Activated CD4-positive, alpha-beta T cell treated with anti-CD3 and anti-CD28 coated beads for 36 hours (primary cell): ENCODE measurements at regions of chr9 and their contacts with region 1.

Region 1: DNA sequence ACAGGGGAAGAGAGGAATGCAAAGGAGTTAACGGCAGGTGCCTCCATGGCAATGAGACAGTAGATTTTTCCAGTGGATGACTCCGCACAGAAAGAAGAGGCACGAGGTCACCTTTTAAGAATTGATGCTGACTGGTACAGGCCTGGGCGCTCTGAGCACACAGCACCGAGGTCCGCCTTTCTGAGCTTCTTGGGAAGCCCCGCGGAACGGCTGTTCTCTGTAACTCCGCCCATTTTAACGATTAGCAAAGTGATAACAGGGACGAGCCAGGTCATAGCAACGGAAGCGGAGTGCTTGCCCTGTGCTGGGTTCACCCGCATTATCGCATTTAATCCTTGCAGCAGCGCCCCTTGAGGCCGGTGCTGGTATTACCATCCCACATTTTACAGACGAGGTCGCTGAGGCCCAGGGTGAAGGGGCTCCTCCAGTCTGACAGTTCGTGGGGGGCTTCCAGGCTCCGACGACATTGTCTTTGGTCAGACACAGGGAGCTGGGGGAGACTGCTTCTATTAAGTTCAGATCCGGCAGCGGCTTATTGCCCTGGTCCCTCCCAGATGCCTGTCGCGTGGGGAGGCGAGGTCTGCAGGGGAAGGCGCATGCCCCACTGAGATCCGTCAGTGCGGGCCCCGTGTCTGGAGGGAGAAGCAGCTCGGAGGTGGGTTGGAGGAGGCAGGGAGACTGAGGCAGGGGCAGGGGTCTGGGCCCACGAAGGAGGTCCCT is 22.4 kb upstream of the HMCN2 start:
- DNase-seq: peak; percentile 88
- ATAC-seq: peak; percentile 45
- H3K4me3 Mint-ChIP-seq: peak overlapping the region; percentile 8
- H3K27ac Mint-ChIP-seq: peak overlapping the region; percentile 26
- H3K4me1 Mint-ChIP-seq: peaks cover 32% of the 10 kb centered on the region
- H3K27me3 Mint-ChIP-seq: no peaks in the 10 kb centered on the region

Region 2: GRCh38 chr9:129460323-129461261 is 782.6 kb before region 1 on chr9:
- CTCF ChIA-PET with region 1: no interaction called
- POLR2A ChIA-PET with region 1: no interaction called
- intact Hi-C with region 1: no loop called
- DNase-seq: peak; percentile 96
- ATAC-seq: peak; percentile 87
- H3K4me3 Mint-ChIP-seq: peak overlapping the region; percentile 72
- H3K27ac Mint-ChIP-seq: peak overlapping the region; percentile 92
- H3K4me1 Mint-ChIP-seq: peaks cover 38% of the 10 kb centered on the region
- H3K27me3 Mint-ChIP-seq: no peaks in the 10 kb centered on the region

Region 3: DNA sequence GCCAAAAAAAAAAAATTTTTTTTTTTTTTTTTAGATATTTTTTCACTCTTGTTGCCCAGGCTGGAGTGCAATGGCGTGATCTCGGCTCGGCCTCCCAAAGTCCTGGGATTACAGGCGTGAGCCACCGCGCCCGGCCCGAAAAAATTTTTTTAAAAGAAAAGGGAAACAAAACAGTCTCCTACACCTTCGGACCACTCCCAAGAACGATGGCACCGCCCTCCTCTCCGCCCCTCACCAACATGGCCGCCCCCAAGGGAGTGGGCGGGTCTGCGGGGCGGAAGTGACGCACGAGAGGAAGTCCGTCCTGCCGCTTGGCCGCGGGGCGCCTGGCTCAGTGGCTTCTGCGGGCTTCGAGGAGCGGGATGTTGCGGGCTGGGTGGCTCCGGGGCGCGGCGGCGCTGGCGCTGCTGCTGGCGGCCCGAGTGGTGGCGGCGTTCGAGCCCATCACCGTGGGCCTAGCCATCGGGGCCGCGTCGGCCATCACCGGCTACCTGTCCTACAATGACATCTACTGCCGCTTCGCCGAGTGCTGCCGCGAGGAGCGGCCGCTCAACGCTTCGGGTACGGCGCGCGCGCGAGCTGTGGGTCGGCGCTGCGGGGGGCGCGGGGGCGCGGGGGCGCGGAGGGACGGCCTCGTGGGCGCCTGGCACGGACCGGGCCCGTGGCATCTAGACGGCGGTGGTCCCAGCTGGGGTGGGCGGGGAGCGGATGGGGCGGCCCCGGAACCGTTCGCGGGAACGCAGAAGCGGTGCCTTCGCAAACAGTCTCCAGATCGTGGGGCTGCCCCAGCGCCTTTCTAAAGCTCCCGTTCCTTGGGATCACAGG is 440.1 kb before region 1 on chr9 and contains the start of gene TOR1B:
- CTCF ChIA-PET with region 1: no interaction called
- POLR2A ChIA-PET with region 1: no interaction called
- intact Hi-C with region 1: loop called in 1 of 2 experiments (anchors 1 kb)
- DNase-seq: peak; percentile 95
- ATAC-seq: peak; percentile 92
- H3K4me3 Mint-ChIP-seq: peak within 1 kb of the TSS; percentile 81
- H3K27ac Mint-ChIP-seq: peak within 1 kb of the TSS; percentile 90
- H3K4me1 Mint-ChIP-seq: peaks cover 25% of the 10 kb centered on the region
- H3K27me3 Mint-ChIP-seq: no peaks in the 10 kb centered on the region
- total RNA-seq, gene TOR1B: 18.0 to 22.1 TPM

Region 4: DNA sequence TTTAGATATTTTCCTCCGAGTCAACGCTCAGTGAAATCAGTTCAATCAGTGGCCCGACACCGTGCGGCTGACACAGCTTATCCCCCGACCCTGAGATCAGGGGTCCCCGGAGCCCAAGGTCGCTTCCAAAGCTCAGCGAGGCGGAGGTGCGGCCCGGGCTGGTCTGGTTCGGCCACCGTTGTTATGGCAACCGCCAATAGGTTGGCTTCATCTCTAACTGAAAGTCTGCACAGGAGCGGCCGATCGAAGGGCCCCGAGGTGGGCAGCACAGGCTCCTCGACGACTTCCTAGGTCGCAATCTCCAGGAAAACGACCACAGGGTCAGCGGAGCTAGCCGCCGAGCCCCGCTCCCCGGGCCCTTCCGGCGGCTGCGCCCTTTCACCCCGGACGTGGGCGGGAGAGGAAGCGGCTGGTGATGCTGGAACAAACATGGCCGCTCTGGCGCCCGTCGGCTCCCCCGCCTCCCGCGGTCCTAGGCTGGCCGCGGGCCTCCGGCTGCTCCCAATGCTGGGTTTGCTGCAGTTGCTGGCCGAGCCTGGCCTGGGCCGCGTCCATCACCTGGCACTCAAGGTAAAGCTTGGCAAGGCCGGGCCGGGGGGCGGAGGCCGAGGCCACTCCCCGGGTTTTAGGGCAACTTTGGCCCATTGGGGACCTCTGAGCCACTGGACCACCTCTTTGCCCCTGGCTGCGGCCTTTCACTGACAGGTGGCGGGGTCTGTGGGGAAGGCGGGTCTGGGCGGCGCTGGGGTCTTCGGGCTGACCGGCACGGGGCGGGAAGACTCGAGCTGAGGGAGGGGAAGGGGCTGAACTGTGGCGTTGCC is 189.5 kb before region 1 on chr9 and contains the start of gene GPR107:
- CTCF ChIA-PET with region 1: no interaction called
- POLR2A ChIA-PET with region 1: no interaction called
- intact Hi-C with region 1: loop called in 1 of 2 experiments (anchors 5 kb)
- DNase-seq: peak; percentile 91
- ATAC-seq: peak; percentile 90
- H3K4me3 Mint-ChIP-seq: peak within 1 kb of the TSS; percentile 94
- H3K27ac Mint-ChIP-seq: peak within 1 kb of the TSS; percentile 86
- H3K4me1 Mint-ChIP-seq: peaks cover 30% of the 10 kb centered on the region
- H3K27me3 Mint-ChIP-seq: no peaks in the 10 kb centered on the region
- total RNA-seq, gene GPR107: 17.7 to 19.7 TPM

Region 5: DNA sequence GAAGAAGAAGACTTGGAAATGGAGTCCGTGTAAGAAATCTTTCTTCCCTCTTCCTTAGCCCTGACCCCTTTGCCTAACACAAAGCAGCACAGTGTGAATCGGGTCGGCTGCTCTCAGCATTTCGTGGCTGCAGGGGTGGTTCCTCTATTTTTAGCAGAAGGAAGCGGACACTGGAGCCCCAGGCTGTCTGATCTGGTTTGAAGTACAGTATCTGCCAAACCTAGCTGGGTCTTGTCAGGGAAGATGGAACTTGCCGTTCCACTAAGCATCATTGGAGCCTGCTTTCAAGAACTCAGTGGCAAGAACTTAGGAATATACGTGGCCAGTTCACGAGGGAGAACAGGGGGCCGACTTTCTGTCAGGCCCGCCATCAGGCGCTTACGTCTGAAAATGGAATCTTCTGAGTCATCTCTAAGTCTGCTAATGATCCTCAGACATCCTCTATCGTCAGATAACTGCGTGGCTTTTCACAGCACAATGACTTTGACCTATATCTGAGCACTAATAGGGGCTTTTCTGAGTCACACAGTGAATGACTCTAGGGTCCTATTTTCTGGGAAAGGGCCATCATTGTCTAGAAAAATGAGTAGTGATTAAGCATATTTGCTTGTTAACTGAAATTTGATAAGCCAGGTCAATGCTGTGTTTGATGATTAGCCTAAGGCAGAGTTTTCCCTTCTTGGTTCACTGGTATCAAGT is 114.3 kb before region 1 on chr9:
- CTCF ChIA-PET with region 1: interaction called, 6 read pairs
- POLR2A ChIA-PET with region 1: no interaction called
- intact Hi-C with region 1: loop called (anchors 1 to 5 kb)
- DNase-seq: peak; percentile 70
- ATAC-seq: peak; percentile 82
- H3K4me3 Mint-ChIP-seq: peak overlapping the region; percentile 75
- H3K27ac Mint-ChIP-seq: peak overlapping the region; percentile 100
- H3K4me1 Mint-ChIP-seq: peaks cover 54% of the 10 kb centered on the region
- H3K27me3 Mint-ChIP-seq: no peaks in the 10 kb centered on the region

Region 6: DNA sequence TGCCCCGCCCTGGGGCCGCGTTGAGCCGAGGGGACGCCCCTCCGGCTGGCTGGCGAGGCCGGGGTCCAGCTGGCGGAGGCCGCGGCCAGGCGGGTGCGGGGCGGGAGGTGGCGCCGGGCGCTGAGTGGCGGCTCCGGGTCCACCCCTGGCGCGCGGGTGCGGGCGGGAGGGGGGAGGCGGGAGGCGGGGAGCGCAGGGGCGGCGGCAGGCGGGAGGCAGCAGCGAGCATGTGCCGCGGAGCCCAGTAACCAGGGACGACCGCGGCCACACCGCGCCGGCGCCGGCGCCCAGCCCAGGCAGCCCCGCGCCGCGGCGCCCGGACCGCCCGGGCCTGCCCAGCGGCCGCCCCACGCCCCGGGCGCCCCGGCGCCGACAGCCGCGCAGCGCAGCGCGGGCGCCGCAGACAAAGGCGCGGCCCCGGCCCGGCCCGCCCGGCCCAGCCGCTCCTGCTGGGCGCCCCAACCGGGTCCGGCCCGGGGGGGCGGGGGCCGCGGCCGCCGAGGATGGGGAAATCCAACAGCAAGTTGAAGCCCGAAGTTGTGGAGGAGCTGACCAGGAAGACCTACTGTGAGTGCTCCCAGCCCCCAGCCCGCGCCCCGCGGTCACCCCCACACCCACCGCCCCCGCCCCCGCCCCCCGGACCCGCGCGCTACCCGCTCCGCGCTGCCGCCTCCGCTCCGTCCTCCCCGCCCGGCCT is 70.9 kb before region 1 on chr9 and contains the start of gene NCS1:
- CTCF ChIA-PET with region 1: interaction called, 5 read pairs
- POLR2A ChIA-PET with region 1: no interaction called
- intact Hi-C with region 1: loop called in 1 of 2 experiments (anchors 5 kb)
- DNase-seq: peak; percentile 74
- ATAC-seq: peak; percentile 70
- H3K4me3 Mint-ChIP-seq: peak within 1 kb of the TSS; percentile 73
- H3K27ac Mint-ChIP-seq: peak within 1 kb of the TSS; percentile 51
- H3K4me1 Mint-ChIP-seq: peaks cover 3% of the 10 kb centered on the region
- H3K27me3 Mint-ChIP-seq: peaks cover 13% of the 10 kb centered on the region
- total RNA-seq, gene NCS1: 24.8 to 25.2 TPM

Region 7: GRCh38 chr9:130188892-130189474 is 54.2 kb before region 1 on chr9:
- CTCF ChIA-PET with region 1: no interaction called
- POLR2A ChIA-PET with region 1: no interaction called
- intact Hi-C with region 1: no loop called
- DNase-seq: no peak
- ATAC-seq: no peak
- H3K4me3 Mint-ChIP-seq: no peak overlapping the region
- H3K27ac Mint-ChIP-seq: no peak overlapping the region
- H3K4me1 Mint-ChIP-seq: no peaks in the 10 kb centered on the region
- H3K27me3 Mint-ChIP-seq: no peaks in the 10 kb centered on the region

Region 8: DNA sequence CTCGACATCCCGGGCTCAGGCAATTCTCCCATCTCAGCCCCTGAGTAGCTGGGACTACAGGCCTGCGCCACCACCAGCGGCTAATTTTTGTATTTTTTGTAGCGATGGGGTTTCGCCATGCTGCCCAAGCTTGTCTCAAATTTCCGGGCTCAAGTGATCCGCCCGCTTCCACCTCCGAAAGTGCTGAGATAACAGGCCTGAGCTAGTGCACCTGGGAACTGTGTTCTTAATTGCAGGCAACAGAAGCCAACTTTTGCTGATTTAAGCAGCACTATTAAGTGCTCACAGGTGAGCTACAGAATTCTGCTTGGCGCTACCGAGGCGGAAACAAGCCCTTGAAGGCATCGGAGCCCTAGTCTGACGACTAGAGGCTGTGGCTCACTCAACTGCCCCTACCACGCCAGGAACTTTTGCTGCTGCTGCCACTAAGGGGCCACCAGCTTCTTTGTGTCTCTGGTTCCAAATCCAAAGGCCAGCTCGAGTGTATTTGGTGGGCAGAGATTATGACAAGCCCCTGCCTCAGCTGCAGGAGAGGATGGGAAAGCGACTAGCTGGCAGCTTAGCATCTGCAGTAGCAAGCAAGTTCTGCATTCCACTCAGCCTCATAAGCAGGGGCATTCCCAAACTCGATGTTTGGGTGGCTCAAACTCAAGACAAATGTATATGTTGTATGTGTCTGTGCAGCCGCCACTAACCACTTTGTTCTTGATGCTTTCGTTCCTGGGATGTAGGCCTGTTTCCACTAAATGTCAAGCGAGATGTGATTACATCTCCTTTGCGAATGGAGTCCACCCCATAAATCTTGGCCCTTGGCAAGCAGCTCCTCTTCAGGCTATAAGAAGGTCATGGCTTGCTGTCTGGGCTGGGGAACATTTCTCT is 11.8 kb after region 1 on chr9:
- CTCF ChIA-PET with region 1: interaction called, 19 read pairs
- POLR2A ChIA-PET with region 1: no interaction called
- intact Hi-C with region 1: no loop called
- DNase-seq: no peak
- ATAC-seq: no peak
- H3K4me3 Mint-ChIP-seq: no peak overlapping the region
- H3K27ac Mint-ChIP-seq: no peak overlapping the region
- H3K4me1 Mint-ChIP-seq: no peaks in the 10 kb centered on the region
- H3K27me3 Mint-ChIP-seq: peaks cover 8% of the 10 kb centered on the region

Region 9: GRCh38 chr9:130343445-130343918 is 100.3 kb after region 1 on chr9:
- CTCF ChIA-PET with region 1: no interaction called
- POLR2A ChIA-PET with region 1: no interaction called
- intact Hi-C with region 1: loop called in 1 of 2 experiments (anchors 2 kb)
- DNase-seq: peak; percentile 66
- ATAC-seq: peak; percentile 40
- H3K4me3 Mint-ChIP-seq: no peak overlapping the region
- H3K27ac Mint-ChIP-seq: no peak overlapping the region
- H3K4me1 Mint-ChIP-seq: no peaks in the 10 kb centered on the region
- H3K27me3 Mint-ChIP-seq: no peaks in the 10 kb centered on the region

Region 10: GRCh38 chr9:130561056-130561455 is 317.9 kb after region 1 on chr9:
- CTCF ChIA-PET with region 1: no interaction called
- POLR2A ChIA-PET with region 1: no interaction called
- intact Hi-C with region 1: no loop called
- DNase-seq: no peak
- ATAC-seq: no peak
- H3K4me3 Mint-ChIP-seq: no peak overlapping the region
- H3K27ac Mint-ChIP-seq: no peak overlapping the region
- H3K4me1 Mint-ChIP-seq: no peaks in the 10 kb centered on the region
- H3K27me3 Mint-ChIP-seq: peaks cover 13% of the 10 kb centered on the region

Region 11: DNA sequence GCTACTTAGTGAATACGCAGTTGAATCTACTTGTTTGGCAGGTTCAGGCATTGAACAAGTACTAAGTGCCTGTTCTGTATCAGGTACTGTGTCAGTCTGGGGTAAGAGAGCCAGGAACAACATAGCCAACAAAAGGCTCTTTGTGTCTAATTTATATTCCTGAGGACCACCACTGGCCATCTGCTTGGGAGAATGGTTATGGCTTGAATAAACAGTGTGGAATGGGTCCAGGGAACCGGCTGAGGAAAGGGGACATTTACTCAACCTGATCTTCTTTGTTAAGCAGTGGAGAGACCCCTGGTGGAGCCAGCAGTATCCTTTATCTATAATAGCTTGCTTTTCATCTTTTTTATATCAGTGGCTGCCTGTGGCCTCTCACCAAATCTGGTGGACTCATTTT is 489.0 kb after region 1 on chr9:
- CTCF ChIA-PET with region 1: no interaction called
- POLR2A ChIA-PET with region 1: no interaction called
- intact Hi-C with region 1: no loop called
- DNase-seq: no peak
- ATAC-seq: no peak
- H3K4me3 Mint-ChIP-seq: no peak overlapping the region
- H3K27ac Mint-ChIP-seq: no peak overlapping the region
- H3K4me1 Mint-ChIP-seq: peaks cover 23% of the 10 kb centered on the region
- H3K27me3 Mint-ChIP-seq: no peaks in the 10 kb centered on the region